Activated T-helper 1 cell treated with anti-CD3 and anti-CD28 coated beads, Interleukin-12 subunit alpha, Interleukin-12 subunit beta, Interleukin-2, Interleukin-4 antibody, amounts not matched to agents 30 ng/mL and 10 ng/mL and 1 ng/mL, durations not matched to agents 14 hours and 24 hours and 36 hours (primary cell): ENCODE measurements at regions of chr4 and their contacts with region 1.

Region 1: DNA sequence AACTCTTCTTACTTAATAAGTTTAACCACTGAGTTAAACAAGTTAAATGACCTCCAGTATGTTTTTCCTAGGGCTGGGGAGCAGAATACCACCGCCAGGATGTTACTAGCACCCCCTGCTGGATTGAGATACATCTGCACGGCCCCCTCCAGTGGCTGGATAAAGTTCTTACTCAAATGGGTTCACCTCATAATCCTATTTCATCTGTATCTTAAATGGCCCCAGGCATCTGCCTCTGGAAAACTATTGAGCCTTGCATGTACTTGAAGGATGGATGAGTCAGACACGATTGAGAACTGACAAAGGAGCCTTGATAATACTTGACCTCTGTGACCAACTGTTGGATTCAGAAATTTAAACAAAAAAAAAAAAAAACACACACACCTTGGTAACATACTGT is 61.5 kb upstream of the MMAA start:
- DNase-seq: peak; percentile 26
- H3K4me3 Mint-ChIP-seq: no peak overlapping the region
- H3K27ac Mint-ChIP-seq: no peak overlapping the region
- H3K4me1 Mint-ChIP-seq: peaks cover 1% of the 10 kb centered on the region
- H3K27me3 Mint-ChIP-seq: no peaks in the 10 kb centered on the region

Region 2: DNA sequence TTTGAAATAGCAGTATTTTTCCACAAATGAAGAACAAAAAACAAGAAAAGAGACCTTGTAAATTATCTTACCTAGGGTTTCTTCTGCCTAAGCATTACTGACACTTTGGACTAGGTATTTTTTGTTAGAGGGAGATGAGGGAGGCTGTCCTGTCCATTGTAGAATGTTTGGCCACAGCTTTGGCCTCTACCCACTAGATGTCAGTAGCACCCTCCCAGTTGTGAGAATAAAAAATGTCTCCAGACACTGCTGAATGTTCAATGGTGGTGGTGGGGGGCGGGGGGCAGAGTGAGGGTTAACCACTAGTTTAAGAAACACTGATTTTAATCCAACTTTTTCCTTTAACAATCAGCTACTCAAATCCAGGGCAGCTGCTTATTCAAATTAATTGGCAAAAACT is 403.1 kb before region 1 on chr4:
- intact Hi-C with region 1: loop called (anchors 10 kb)
- DNase-seq: no peak
- H3K4me3 Mint-ChIP-seq: no peak overlapping the region
- H3K27ac Mint-ChIP-seq: no peak overlapping the region
- H3K4me1 Mint-ChIP-seq: peaks cover 18% of the 10 kb centered on the region
- H3K27me3 Mint-ChIP-seq: no peaks in the 10 kb centered on the region

Region 3: DNA sequence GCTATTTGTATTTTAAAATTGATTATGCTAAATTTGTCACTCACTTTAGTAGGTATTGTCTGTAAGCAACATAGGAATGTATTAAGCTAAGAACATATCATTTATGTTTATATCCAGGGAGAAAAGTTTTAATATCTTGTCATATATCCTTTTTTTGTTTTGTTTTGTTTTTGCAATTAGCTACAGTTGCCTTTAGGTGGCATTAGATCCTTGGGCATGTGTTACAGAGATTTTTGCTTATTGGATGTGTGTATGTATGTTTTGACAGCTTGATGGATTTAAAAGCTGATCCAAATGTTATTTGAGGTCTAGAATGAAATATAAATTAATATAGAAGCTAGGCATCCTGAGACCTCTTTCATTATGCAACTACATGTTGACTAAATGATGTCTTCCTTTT is 341.2 kb before region 1 on chr4:
- intact Hi-C with region 1: loop called (anchors 5 kb)
- DNase-seq: no peak
- H3K4me3 Mint-ChIP-seq: no peak overlapping the region
- H3K27ac Mint-ChIP-seq: no peak overlapping the region
- H3K4me1 Mint-ChIP-seq: no peaks in the 10 kb centered on the region
- H3K27me3 Mint-ChIP-seq: peaks cover 13% of the 10 kb centered on the region

Region 4: GRCh38 chr4:145234091-145234706 is 323.5 kb before region 1 on chr4:
- intact Hi-C with region 1: loop called (anchors 1 kb)
- DNase-seq: peak; percentile 20
- H3K4me3 Mint-ChIP-seq: no peak overlapping the region
- H3K27ac Mint-ChIP-seq: no peak overlapping the region
- H3K4me1 Mint-ChIP-seq: no peaks in the 10 kb centered on the region
- H3K27me3 Mint-ChIP-seq: peaks cover 7% of the 10 kb centered on the region

Region 5: DNA sequence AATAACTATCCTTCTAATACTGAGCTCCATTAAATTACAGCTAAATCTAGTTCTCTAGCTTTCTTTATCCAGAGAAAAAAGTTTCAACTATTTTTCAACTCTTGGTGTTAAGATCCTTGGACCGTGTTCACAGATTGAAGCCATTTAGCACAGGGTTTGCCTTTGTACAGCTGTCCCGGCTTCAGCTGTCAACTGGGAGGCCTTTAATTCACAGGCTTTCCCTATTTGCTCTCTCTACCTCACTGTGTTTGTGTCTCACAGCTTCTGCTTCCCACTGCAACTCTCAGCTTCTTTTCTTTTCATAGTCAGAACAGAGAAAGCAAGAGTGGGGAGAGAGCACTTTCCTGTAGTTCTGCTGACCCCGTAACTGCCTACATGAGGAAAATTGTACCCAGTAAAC is 153.0 kb before region 1 on chr4:
- intact Hi-C with region 1: loop called (anchors 5 kb)
- DNase-seq: no peak
- H3K4me3 Mint-ChIP-seq: no peak overlapping the region
- H3K27ac Mint-ChIP-seq: no peak overlapping the region
- H3K4me1 Mint-ChIP-seq: no peaks in the 10 kb centered on the region
- H3K27me3 Mint-ChIP-seq: no peaks in the 10 kb centered on the region

Region 6: GRCh38 chr4:145481164-145481941 is 76.4 kb before region 1 on chr4 and contains the start of gene SMAD1:
- intact Hi-C with region 1: loop called (anchors 5 kb)
- DNase-seq: peak; percentile 11
- H3K4me3 Mint-ChIP-seq: peak within 1 kb of the TSS; percentile 73
- H3K27ac Mint-ChIP-seq: peak within 1 kb of the TSS; percentile 49
- H3K4me1 Mint-ChIP-seq: peaks cover 6% of the 10 kb centered on the region
- H3K27me3 Mint-ChIP-seq: peaks cover 33% of the 10 kb centered on the region
- total RNA-seq, gene SMAD1: 3.1 and 3.2 TPM in 2 replicates

Region 7: DNA sequence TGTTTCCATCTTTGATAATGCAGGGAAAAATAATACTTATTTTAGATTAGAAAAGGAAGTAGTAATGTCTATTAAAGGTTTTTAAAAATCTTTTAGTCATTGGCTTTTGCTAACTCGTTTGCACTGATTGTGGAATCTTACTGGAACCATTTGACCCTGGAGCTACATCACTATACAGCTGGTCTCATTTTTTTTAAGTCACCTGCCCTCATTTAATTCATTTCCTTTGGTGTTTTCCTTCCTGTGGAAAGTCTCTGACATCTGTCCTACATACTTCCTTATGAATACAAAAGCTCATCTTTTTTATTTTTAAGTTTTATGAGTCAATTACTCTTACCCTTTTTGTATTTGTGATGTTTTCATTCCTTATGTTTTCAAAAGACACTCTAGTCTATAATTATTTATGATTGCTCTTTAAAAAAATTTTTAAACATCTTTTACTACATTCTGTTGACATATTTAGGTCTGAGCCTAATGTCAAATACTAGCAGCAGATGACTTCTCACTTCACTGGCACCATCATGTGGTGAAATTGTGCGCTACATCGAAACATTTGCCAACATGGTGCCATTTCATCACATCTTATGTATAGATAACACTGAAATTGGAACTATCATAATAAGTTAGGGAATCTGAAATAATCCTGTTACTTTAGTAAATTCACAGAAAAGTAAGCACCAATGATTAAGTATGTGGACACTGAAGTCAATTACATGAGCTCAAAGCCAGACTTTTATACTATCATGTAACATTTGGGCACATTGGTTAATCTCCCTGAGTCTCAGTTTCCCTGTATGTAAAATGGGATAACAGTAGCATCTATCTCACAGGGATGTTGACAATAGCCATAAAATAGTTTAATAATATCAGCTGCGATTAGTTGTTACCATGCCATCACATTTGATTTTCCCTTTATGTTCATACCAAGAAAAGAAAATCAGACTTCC is 52.0 kb after region 1 on chr4:
- intact Hi-C with region 1: loop called (anchors 1 kb)
- DNase-seq: peak; percentile 31
- H3K4me3 Mint-ChIP-seq: no peak overlapping the region
- H3K27ac Mint-ChIP-seq: no peak overlapping the region
- H3K4me1 Mint-ChIP-seq: peaks cover 18% of the 10 kb centered on the region
- H3K27me3 Mint-ChIP-seq: peaks cover 11% of the 10 kb centered on the region